ENCODE measurements at regions of chr22 and their contacts with region 1.

Region 1: DNA sequence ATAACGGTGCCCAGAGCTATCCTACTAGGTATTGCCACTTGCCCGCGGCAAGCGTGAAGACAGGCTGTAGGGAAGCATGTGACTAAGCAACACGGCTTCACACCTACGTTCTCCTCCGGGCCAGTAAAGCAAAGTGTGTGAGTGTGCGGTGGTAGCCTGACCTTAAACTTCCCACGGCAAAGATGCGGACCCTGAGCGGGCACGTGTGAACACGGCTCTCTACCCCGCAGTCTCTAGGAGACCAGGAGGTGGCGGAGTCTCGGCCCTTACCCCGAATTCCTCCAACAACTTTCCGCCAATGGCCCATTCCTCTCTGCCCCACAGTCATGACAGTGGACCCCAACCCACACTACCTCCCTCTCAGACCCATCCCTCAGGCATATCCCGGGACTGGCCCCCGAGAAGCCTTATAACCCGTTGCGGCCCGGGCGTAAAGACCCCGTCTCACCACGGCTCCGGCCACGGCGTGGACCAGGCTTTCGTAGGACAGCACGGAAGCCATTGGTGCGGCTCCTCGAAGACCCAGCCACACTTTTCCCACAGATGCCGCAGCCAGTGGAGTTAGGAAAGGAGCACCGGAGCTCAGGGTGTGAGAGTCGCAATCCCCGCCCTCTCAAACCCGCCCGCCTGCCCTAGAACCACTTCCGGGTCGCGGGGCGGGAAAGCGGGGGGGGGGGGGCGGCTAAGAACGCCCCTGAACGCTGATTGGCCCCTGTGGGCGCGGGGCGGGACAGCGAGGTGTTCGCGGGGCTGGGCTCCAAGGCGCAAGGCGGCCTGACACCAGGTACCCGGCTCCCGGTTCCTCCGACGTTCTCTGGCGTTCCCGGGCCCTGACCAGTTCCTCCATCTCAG is at the start of gene SLC25A17:
- DNase-seq: peak; percentile 32 to 92
- H3K4me3 ChIP-seq: peak within 1 kb of the TSS; percentile 82 to 90
- H3K27ac ChIP-seq: peak within 1 kb of the TSS; percentile 74 to 78
- H3K4me1 ChIP-seq: peaks cover 0 to 13% of the 10 kb centered on the region in 2 donors
- H3K27me3 ChIP-seq: no peaks in the 10 kb centered on the region
- CTCF ChIP-seq: peak in 2 of 3 experiments; percentile 23 to 51
- total RNA-seq, gene SLC25A17: 62.1 TPM

Region 2: DNA sequence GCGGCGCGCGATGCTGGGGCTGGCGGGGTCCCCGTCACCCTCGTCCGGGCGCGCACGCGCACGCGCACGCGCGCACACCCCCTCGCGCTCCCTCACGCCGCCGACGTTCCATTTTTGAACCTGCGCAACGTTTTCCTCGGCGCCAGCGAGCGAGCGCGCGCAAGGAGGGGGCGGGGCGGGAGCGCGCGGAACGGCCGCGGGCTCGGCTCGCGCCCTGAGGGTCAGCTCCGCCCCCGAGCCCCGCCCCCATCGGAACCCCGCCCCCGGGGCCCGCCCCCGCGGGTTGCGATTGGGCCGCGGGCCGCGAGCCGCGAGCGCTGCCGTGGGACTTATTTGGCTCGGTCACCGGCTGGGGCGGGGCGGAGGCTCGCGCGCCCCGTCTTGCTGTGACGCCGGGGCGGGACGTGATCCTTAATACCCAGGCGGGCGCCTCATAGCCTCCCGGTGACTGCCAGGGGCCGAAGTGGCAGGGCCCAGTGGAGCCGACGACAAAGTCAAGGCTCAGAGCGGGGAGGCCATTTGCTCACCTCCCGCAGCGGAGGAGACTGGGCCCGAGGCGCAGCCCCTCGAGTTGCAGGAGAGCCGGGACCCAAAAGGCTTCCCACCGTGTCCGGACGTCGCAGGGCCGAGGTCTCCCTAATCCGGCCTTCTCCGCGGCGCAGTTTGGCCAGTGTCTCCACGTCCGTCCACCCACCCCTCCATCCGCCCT is 1666.3 kb before region 1 on chr22 and contains the start of gene CBX7:
- intact Hi-C with region 1: loop called (anchors 10 kb)
- DNase-seq: peak; percentile 84 to 98
- H3K4me3 ChIP-seq: peak within 1 kb of the TSS; percentile 88 to 92
- H3K27ac ChIP-seq: peak within 1 kb of the TSS; percentile 93 to 96
- H3K4me1 ChIP-seq: peaks cover 6 to 24% of the 10 kb centered on the region in 2 donors
- H3K27me3 ChIP-seq: no peaks in the 10 kb centered on the region
- CTCF ChIP-seq: no peak
- total RNA-seq, gene CBX7: 261 TPM